Activated T-helper 2 cell treated with anti-CD3 and anti-CD28 coated beads, Interferon-gamma antibody, Interleukin-2, Interleukin-4, amounts not matched to agents 10 μg/mL and 5 μg/mL and 100 μg/mL, durations not matched to agents 14 hours and 24 hours and 36 hours (primary cell): ENCODE measurements at regions of chr21 and their contacts with region 1.

Region 1: GRCh38 chr21:37220981-37221664 is 46.0 kb downstream of the VPS26C start:
- DNase-seq: peak; percentile 90
- H3K4me3 Mint-ChIP-seq: peak overlapping the region; percentile 88
- H3K27ac Mint-ChIP-seq: peak overlapping the region; percentile 95
- H3K4me1 Mint-ChIP-seq: peaks cover 53% of the 10 kb centered on the region
- H3K27me3 Mint-ChIP-seq: no peaks in the 10 kb centered on the region

Region 2: GRCh38 chr21:36966066-36966820 is 254.9 kb before region 1 on chr21 and contains the start of gene HLCS:
- intact Hi-C with region 1: loop called (anchors 10 kb)
- DNase-seq: peak; percentile 66
- H3K4me3 Mint-ChIP-seq: peak within 1 kb of the TSS; percentile 84
- H3K27ac Mint-ChIP-seq: peak within 1 kb of the TSS; percentile 80
- H3K4me1 Mint-ChIP-seq: peaks cover 20% of the 10 kb centered on the region
- H3K27me3 Mint-ChIP-seq: no peaks in the 10 kb centered on the region
- total RNA-seq, gene HLCS: 17.2 and 18.7 TPM in 2 replicates

Region 3: GRCh38 chr21:37072988-37073416 is 148.1 kb before region 1 on chr21 and contains the starts of genes PIGP and TTC3:
- intact Hi-C with region 1: loop called (anchors 2 kb)
- DNase-seq: peak; percentile 93
- H3K4me3 Mint-ChIP-seq: peak within 1 kb of the TSS; percentile 90
- H3K27ac Mint-ChIP-seq: peak within 1 kb of the TSS; percentile 89
- H3K4me1 Mint-ChIP-seq: peaks cover 48% of the 10 kb centered on the region
- H3K27me3 Mint-ChIP-seq: no peaks in the 10 kb centered on the region
- total RNA-seq, gene PIGP: 20.6 and 23.7 TPM in 2 replicates
- total RNA-seq, gene TTC3: 60.9 and 66.8 TPM in 2 replicates

Region 4: GRCh38 chr21:37257967-37258877 is 37.1 kb after region 1 on chr21:
- intact Hi-C with region 1: loop called (anchors 1 kb)
- DNase-seq: peak; percentile 87
- H3K4me3 Mint-ChIP-seq: peak overlapping the region; percentile 93
- H3K27ac Mint-ChIP-seq: peak overlapping the region; percentile 99
- H3K4me1 Mint-ChIP-seq: peaks cover 40% of the 10 kb centered on the region
- H3K27me3 Mint-ChIP-seq: no peaks in the 10 kb centered on the region

Region 5: GRCh38 chr21:37267269-37268184 is 46.4 kb after region 1 on chr21 and contains the start of gene VPS26C:
- intact Hi-C with region 1: loop called (anchors 1 kb)
- DNase-seq: peak; percentile 99
- H3K4me3 Mint-ChIP-seq: peak within 1 kb of the TSS; percentile 96
- H3K27ac Mint-ChIP-seq: peak within 1 kb of the TSS; percentile 97
- H3K4me1 Mint-ChIP-seq: peaks cover 30% of the 10 kb centered on the region
- H3K27me3 Mint-ChIP-seq: peaks cover 2% of the 10 kb centered on the region
- total RNA-seq, gene VPS26C: 58.0 and 59.4 TPM in 2 replicates

Region 6: DNA sequence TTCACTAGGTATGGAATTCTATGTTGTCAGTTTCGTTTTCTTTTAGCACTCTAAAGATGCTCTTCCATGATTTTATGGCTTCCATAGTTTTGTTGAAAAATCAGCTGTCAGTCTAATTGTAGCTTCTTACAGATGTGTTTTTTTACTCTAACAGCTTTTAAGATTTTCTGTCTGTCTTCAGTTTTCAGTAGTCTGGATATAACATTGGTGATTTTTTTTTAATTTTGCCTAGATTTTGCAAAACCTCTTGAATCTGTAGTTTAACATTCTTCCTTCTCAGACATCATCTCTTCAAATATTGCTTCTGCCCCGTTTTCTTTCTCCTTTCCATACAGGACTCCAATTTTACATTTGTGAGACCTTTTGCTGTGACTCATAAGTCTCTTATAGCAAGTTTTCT is 127.5 kb after region 1 on chr21:
- intact Hi-C with region 1: no loop called
- DNase-seq: no peak
- H3K4me3 Mint-ChIP-seq: no peak overlapping the region
- H3K27ac Mint-ChIP-seq: no peak overlapping the region
- H3K4me1 Mint-ChIP-seq: no peaks in the 10 kb centered on the region
- H3K27me3 Mint-ChIP-seq: peaks cover 7% of the 10 kb centered on the region

Region 7: GRCh38 chr21:37463083-37463801 is 242.1 kb after region 1 on chr21:
- intact Hi-C with region 1: loop called (anchors 5 kb)
- DNase-seq: no peak
- H3K4me3 Mint-ChIP-seq: no peak overlapping the region
- H3K27ac Mint-ChIP-seq: peak overlapping the region; percentile 48
- H3K4me1 Mint-ChIP-seq: peaks cover 54% of the 10 kb centered on the region
- H3K27me3 Mint-ChIP-seq: no peaks in the 10 kb centered on the region

Region 8: GRCh38 chr21:37563641-37564340 is 342.7 kb after region 1 on chr21:
- intact Hi-C with region 1: loop called (anchors 5 kb)
- DNase-seq: peak; percentile 91
- H3K4me3 Mint-ChIP-seq: peak overlapping the region; percentile 86
- H3K27ac Mint-ChIP-seq: peak overlapping the region; percentile 98
- H3K4me1 Mint-ChIP-seq: peaks cover 17% of the 10 kb centered on the region
- H3K27me3 Mint-ChIP-seq: peaks cover 6% of the 10 kb centered on the region